Calu3 (cell line): ENCODE measurements at regions of chrX and their contacts with region 1.

Region 1: GRCh38 chrX:134782796-134783195 is 124.5 kb upstream of the PLAC1 start:
- DNase-seq: no peak
- H3K4me3 Mint-ChIP-seq: no peak overlapping the region
- H3K27ac Mint-ChIP-seq: no peak overlapping the region
- H3K4me1 Mint-ChIP-seq: no peaks in the 10 kb centered on the region
- H3K27me3 Mint-ChIP-seq: no peaks in the 10 kb centered on the region
- CTCF ChIP-seq: peak; percentile 21

Region 2: DNA sequence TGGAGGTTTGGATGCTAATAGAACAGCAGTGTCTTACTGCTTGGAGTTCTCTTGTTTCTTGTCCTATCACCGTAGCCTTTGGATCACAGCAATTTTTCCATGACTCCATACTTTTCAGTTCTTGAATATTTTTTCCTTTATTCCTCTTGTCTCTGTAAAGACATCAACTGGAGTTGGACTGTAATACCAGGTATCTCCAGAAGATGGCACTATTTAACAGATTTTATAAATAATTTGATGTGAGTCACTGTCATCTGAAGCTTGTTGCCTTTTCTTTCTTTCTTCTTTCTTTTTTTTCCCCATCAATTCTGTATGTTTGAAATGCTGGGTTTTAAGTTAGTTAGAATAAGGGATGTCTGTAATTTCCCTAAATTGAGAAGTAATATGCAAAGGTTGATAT is 298.8 kb before region 1 on chrX:
- CTCF ChIA-PET with region 1: interaction called, 11 read pairs
- intact Hi-C with region 1: loop called (anchors 1 kb)
- DNase-seq: no peak
- H3K4me3 Mint-ChIP-seq: no peak overlapping the region
- H3K27ac Mint-ChIP-seq: no peak overlapping the region
- H3K4me1 Mint-ChIP-seq: no peaks in the 10 kb centered on the region
- H3K27me3 Mint-ChIP-seq: no peaks in the 10 kb centered on the region
- CTCF ChIP-seq: peak; percentile 51

Region 3: DNA sequence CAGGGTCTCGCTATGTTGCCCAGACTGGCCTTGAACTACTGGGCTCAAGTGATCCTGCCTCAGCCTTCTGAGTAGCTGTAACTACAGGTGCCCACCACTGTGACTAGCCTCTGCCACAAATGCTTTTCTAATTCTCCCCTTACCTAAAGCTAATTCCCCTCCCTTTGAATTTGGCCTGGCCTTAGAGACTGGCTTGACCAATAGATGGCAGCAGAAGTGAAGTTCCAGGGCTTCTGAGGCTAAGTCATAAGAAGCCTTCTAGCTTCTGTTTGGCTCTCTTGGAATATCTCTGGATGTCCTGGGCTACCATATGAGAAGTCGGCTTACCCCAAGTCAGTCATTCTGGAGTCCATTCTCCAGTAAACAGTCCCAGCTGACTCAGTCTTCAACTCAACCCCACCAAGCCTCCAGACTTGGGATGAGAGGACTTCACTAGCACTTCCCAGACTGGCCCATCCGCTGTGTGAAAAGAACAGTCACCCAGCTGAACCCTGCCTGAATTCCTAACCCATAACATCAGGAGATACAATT is 261.9 kb before region 1 on chrX:
- CTCF ChIA-PET with region 1: interaction called, 12 read pairs
- intact Hi-C with region 1: no loop called
- DNase-seq: peak; percentile 49
- H3K4me3 Mint-ChIP-seq: no peak overlapping the region
- H3K27ac Mint-ChIP-seq: no peak overlapping the region
- H3K4me1 Mint-ChIP-seq: no peaks in the 10 kb centered on the region
- H3K27me3 Mint-ChIP-seq: no peaks in the 10 kb centered on the region
- CTCF ChIP-seq: no peak

Region 4: DNA sequence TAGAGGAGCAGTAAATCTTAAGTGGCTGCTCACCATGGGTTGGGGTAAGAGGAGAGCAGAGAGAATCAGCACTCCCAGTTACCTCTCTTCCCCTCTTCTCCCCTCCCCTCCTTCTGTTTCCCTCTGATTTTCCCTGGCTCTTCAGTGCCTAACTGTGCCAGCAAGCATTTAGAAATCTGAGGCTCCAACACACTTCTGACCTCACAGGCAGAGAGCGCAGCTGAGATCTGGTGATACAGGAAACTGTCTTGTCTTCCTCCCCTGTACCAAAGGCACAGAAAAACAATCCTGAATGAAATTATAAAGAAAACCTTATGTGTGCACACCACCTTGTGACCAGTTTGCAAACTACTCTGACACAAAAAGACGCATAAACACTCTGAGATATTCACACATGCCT is 125.6 kb after region 1 on chrX:
- CTCF ChIA-PET with region 1: interaction called, 3 read pairs
- intact Hi-C with region 1: loop called (anchors 5 kb)
- DNase-seq: no peak
- H3K4me3 Mint-ChIP-seq: no peak overlapping the region
- H3K27ac Mint-ChIP-seq: no peak overlapping the region
- H3K4me1 Mint-ChIP-seq: no peaks in the 10 kb centered on the region
- H3K27me3 Mint-ChIP-seq: no peaks in the 10 kb centered on the region
- CTCF ChIP-seq: no peak

Region 5: DNA sequence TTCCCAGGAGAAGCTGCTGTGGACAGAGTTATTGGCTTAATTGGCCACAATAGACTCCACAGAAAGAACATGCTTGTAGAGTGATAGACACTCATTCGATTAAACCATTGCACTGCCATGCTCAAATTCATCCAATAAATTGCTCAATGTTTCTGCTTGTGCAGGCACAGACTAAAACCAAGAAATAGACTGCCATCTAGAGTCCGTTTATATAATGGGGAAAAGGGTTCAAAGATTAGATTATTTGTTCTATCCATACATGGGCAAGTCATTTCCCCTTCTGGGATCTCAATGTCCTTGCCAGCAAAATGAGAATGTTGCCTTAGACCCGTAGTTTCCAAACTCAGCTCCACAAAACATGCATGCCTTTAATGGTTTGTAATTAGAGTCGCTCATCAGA is 216.7 kb after region 1 on chrX:
- CTCF ChIA-PET with region 1: no interaction called
- intact Hi-C with region 1: loop called (anchors 5 kb)
- DNase-seq: no peak
- H3K4me3 Mint-ChIP-seq: no peak overlapping the region
- H3K27ac Mint-ChIP-seq: no peak overlapping the region
- H3K4me1 Mint-ChIP-seq: peaks cover 8% of the 10 kb centered on the region
- H3K27me3 Mint-ChIP-seq: no peaks in the 10 kb centered on the region
- CTCF ChIP-seq: peak; percentile 30